Prostate gland (tissue), 2 donors: ENCODE measurements at regions of chr7 and their contacts with region 1.

Region 1: DNA sequence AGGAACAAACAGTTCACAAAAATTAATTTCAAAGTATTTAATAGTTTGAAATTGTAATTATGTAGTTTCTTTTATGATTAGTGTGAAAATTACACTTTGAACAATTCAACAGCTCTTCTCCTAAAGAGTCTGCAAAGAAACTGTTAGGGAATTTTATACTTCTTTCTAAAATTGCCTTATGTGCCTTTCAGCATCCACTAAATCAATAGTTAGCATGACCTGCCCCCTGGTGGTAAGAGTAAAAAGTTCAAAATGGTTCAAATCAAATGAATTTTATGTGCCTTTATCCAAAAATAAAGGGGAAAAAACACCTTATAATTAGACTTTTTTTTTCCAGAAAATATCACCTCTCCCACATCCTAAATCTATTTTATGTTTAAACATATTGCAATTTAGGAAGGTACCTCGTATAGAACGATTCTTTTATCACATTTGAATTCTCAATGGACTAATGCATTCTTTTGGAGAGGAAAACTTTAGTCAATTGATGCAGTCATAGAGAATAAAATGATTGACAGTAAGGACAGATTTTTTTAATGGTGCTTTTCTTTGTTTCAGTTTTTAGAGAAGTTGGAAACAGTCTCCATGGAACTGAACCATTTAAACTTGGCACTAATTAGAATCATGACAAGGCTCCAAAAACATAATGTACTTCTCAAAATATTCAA is 163.7 kb downstream of the SEMA3D start:
- DNase-seq: peak; percentile 33
- H3K4me3 ChIP-seq: no peak overlapping the region
- H3K27ac ChIP-seq: no peak overlapping the region
- H3K4me1 ChIP-seq: no peaks in the 10 kb centered on the region
- H3K27me3 ChIP-seq: no peaks in the 10 kb centered on the region
- CTCF ChIP-seq: peak; percentile 59 to 84 (median 81)
- POLR2A ChIP-seq: no peak

Region 2: GRCh38 chr7:83936056-83936708 is 1087.0 kb before region 1 on chr7:
- intact Hi-C with region 1: loop called (anchors 5 kb)
- DNase-seq: peak; percentile 31
- H3K4me3 ChIP-seq: no peak overlapping the region
- H3K27ac ChIP-seq: no peak overlapping the region
- H3K4me1 ChIP-seq: no peaks in the 10 kb centered on the region
- H3K27me3 ChIP-seq: no peaks in the 10 kb centered on the region
- CTCF ChIP-seq: peak; percentile 53 to 70 (median 64)
- POLR2A ChIP-seq: no peak

Region 3: GRCh38 chr7:83976295-83976694 is 1046.9 kb before region 1 on chr7:
- intact Hi-C with region 1: loop called (anchors 5 kb)
- DNase-seq: no peak
- H3K4me3 ChIP-seq: no peak overlapping the region
- H3K27ac ChIP-seq: no peak overlapping the region
- H3K4me1 ChIP-seq: no peaks in the 10 kb centered on the region
- H3K27me3 ChIP-seq: no peaks in the 10 kb centered on the region
- CTCF ChIP-seq: peak; percentile 28 to 78 (median 70)
- POLR2A ChIP-seq: no peak

Region 4: DNA sequence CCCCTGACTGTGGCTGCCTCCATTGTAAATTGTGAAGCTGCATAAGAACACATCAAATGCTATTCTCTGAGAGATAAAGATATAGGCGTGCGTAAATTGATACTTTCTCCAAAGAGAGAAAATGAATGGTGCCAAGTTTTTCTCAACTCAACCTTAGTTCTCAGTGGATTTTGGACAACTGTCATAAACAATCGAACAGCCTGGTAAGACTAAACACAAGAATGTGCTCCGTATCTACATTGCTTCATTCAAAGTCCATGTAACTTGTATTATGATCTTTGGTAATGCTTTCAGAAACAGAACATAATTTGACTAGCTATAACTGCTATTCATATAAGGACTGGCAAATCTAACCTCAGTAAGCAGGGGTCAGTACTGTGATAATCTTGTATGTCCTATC is 265.4 kb before region 1 on chr7:
- intact Hi-C with region 1: no loop called
- DNase-seq: no peak
- H3K4me3 ChIP-seq: no peak overlapping the region
- H3K27ac ChIP-seq: no peak overlapping the region
- H3K4me1 ChIP-seq: no peaks in the 10 kb centered on the region
- H3K27me3 ChIP-seq: no peaks in the 10 kb centered on the region
- CTCF ChIP-seq: no peak
- POLR2A ChIP-seq: no peak